ENCODE measurements at regions of chr6 and their contacts with region 1.

Region 1: DNA sequence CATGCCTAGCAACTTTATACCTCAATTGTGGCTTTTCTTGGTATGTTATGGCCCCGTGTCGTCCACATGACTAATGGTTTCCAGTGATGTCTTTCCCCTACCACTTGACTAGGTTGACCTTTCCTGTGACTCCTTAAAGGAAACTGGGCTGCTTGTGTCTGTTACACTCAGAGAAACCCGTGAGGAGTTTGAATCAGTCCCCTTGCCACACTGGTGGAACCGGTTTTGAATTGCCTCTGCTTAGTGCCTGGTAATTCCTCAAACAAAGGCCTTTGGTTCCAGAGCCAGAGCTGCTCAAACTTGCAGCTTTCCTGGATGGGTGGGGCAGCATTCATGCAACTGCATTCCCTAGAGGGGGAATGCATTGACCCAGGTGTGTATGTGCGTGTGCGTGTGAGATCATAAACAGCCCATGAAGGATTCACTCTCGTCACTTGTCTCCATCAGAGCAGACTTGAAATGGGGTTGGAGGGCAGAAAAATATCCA is 22.0 kb downstream of the ECT2L start:
- DNase-seq: no peak
- H3K4me3 Mint-ChIP-seq: no peak overlapping the region
- H3K27ac Mint-ChIP-seq: no peak overlapping the region
- H3K4me1 Mint-ChIP-seq: peaks cover 25% of the 10 kb centered on the region
- H3K27me3 Mint-ChIP-seq: no peaks in the 10 kb centered on the region

Region 2: GRCh38 chr6:138728662-138729061 is 89.2 kb before region 1 on chr6:
- CTCF ChIA-PET with region 1: no interaction called
- DNase-seq: no peak
- H3K4me3 Mint-ChIP-seq: no peak overlapping the region
- H3K27ac Mint-ChIP-seq: no peak overlapping the region
- H3K4me1 Mint-ChIP-seq: no peaks in the 10 kb centered on the region
- H3K27me3 Mint-ChIP-seq: peaks cover 4% of the 10 kb centered on the region

Region 3: DNA sequence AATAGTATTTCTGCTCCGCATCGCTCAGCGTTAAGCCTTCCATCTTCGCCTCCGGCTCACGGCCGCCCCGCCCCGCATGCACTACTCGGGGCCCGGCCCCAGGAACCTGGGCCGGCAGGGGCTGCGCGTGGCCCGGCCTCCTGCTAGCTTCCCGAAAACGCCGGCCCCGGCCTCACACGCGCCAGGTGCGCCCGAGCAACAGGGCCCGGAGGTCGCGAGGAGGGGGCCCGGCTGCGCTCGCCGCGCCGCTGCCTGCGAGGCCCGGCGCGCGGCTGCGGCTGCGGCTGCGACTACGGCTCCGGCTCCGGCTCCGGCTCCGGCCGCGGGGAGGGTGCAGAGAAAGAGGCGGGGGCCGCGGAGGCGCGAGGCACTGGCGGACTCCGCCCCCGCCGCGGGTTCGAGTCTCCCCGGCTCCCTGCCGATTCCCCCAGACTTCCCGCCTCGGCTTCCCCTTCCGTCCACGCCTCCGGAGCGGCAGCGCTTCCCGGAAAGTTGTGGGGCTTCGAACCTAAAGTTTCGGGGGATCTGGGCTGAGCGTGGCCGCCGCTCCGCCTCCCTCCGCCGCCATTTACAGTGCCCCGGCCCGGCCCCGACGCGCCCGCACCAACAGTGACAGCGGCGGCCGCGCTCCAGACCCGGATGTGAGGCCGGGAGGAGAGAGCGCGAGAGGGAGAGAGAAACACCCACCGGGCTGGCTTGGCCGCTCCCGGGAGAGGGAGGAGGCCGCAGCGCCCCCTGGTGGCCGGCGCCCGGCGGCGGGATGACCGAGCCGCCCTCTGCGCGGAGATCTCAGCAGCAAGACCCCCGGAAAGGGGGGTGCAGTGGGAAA is 170.0 kb after region 1 on chr6 and contains the start of gene REPS1:
- CTCF ChIA-PET with region 1: interaction called, 22 read pairs
- DNase-seq: peak; percentile 93
- H3K4me3 Mint-ChIP-seq: peak within 1 kb of the TSS; percentile 87
- H3K27ac Mint-ChIP-seq: peak within 1 kb of the TSS; percentile 91
- H3K4me1 Mint-ChIP-seq: peaks cover 7% of the 10 kb centered on the region
- H3K27me3 Mint-ChIP-seq: no peaks in the 10 kb centered on the region